Activated CD8-positive, alpha-beta T cell treated with anti-CD3 and anti-CD28 coated beads for 36 hours (primary cell): ENCODE measurements at regions of chr20 and their contacts with region 1.

Region 1: DNA sequence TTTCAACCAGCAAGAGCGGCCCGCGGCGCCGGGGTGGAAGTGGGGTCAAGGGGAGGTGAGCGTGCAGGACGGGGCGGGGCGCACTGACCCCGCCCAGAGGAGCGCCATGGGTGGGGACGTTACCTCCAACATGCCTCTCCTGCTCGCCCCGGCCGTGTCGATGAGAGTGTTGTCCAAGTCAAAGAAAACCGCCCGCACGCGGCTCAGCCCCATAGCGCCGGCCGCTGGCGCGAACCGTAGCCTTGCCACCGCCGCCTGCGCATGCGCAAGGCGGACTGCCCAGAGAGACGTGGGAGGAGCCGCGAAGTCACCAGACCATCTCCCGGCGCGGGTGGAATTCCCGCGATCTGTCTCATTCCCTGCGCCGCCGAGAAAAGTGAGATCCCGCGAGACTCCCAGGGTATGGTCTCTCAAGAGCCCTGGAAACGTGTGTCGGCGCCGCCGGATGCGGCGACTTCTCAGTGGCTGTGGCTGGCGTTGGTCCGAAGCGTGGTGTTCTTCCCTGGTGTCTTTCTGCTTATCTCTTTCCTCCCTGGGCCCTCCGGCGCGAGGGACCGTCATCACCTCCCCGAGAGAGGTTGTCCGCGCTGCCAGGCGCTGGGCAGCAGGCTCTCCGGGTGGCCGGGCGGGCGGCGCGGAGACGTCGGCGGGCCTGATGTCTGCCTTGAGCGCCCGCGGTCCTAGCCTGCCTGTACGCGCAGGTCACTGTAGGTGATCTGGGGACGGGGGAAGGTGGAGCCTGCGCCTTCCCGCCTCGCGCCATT is at the start of gene NANP:
- DNase-seq: peak; percentile 96
- ATAC-seq: peak; percentile 85
- H3K4me3 Mint-ChIP-seq: peak within 1 kb of the TSS; percentile 84
- H3K27ac Mint-ChIP-seq: peak within 1 kb of the TSS; percentile 95
- H3K4me1 Mint-ChIP-seq: peaks cover 16% of the 10 kb centered on the region
- H3K27me3 Mint-ChIP-seq: no peaks in the 10 kb centered on the region
- CTCF ChIP-seq: no peak
- total RNA-seq, gene NANP: 7.6 to 8.0 TPM

Region 2: DNA sequence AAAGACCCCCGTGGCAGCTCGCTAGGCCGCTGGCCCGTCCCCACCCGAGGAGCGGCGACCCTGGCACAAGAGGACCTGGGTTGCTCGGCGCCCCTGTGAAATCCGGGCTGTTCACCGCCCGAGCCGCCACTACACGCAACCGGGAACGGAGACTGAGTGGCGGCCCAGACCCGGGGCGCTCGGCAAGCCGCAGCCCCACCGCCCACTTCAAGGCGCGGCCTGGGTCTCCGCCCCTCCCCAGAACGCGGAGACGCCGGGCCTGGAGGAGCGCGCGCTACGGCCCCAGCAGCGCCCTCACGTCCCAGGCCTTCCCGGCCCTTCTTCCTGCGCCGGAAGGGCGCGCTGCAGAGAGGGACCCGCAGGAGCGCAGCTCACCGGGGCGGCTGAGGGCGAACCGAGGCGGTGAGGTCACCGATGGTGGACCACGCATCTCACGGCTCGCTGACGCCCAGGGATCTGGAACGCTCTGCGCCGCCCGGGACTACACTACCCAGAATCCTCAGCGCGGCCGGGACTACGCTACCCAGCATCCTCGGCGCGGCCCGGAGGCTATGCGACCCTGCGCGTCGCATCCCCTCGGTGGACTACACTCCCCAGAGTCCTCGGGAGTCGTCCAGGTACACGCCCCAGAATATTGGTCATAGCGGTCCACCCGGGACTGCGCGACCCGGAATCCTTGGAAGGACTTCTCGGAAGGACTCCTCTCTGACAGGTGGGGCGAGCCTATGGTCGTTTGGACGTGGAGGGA is 72.6 kb after region 1 on chr20 and contains the start of gene ZNF337:
- CTCF ChIA-PET with region 1: no interaction called
- POLR2A ChIA-PET with region 1: no interaction called
- intact Hi-C with region 1: loop called (anchors 5 kb)
- DNase-seq: peak; percentile 97
- ATAC-seq: peak; percentile 98
- H3K4me3 Mint-ChIP-seq: peak within 1 kb of the TSS; percentile 84
- H3K27ac Mint-ChIP-seq: peak within 1 kb of the TSS; percentile 89
- H3K4me1 Mint-ChIP-seq: peaks cover 39% of the 10 kb centered on the region
- H3K27me3 Mint-ChIP-seq: no peaks in the 10 kb centered on the region
- CTCF ChIP-seq: no peak
- total RNA-seq, gene ZNF337: 15.0 to 16.6 TPM

Region 3: GRCh38 chr20:25725639-25726038 is 101.7 kb after region 1 on chr20:
- CTCF ChIA-PET with region 1: no interaction called
- POLR2A ChIA-PET with region 1: no interaction called
- intact Hi-C with region 1: no loop called
- DNase-seq: no peak
- ATAC-seq: no peak
- H3K4me3 Mint-ChIP-seq: no peak overlapping the region
- H3K27ac Mint-ChIP-seq: peak overlapping the region; percentile 36
- H3K4me1 Mint-ChIP-seq: peaks cover 10% of the 10 kb centered on the region
- H3K27me3 Mint-ChIP-seq: no peaks in the 10 kb centered on the region
- CTCF ChIP-seq: no peak